Activated B cell treated with CpG ODN at 0.5 μM for 24 hours (primary cell): ENCODE measurements at regions of chr16 and their contacts with region 1.

Region 1: DNA sequence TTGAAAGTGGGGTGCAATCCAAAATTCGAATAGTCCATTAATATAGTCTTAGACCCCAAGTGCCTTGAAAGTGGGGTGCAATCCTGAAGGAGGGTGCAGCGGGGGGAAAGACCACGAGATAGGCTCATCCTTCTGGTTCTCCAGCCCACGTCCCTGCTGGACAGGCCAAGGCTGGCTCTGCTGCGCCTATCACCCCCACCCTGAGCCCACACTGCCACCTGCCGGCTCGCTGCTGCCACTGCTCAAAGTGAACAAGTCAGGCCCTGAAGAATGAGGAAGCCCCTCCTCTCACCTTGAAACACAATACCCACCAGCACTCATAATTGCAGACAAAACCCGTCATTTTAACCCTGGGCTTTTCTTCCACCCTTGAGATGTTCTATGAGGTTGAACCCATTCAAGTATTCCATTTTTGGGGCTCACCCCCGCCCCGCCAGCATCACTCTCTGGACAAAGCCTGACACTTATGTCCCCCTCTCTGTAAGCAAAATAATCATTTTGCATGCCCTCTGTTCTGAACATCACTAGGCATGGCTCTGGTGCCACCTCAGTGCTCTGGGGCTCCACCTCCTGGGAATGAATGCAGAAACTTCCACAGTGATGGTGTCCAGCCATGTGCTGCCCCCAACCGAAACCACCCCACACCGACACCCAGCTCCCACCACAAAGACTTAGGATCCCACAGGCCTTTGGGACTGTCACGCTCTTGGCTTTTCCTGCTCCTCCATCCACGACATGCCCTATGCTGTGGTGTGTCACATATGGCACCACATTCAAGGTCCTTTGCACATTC is 56.8 kb downstream of the BEAN1 start:
- DNase-seq: peak; percentile 69
- ATAC-seq: peak; percentile 94
- H3K4me3 Mint-ChIP-seq: no peak overlapping the region
- H3K27ac Mint-ChIP-seq: no peak overlapping the region
- H3K4me1 Mint-ChIP-seq: peaks cover 15% of the 10 kb centered on the region
- H3K27me3 Mint-ChIP-seq: no peaks in the 10 kb centered on the region
- CTCF ChIP-seq: peak; percentile 66

Region 2: DNA sequence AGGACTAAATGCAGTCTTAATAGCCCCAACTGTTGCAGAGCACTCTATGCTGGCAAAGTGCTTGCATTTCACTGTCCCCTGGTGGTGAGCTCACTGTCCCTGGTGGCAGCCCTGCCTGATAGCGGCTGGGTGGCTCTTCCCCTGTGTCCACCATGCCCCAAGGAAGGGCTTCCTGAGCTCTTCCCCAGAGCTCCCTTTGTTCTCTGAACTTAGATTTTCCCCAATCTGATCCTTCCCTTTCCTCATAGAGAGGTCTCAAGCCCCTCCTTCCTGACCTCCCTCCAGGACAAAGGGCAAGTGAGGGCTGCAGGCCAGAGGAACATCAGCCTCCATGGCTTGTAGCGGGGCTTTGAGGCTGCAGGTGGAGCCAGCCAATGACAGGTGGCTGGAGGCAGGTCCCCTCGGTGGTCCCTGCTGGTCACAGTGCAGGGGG is 39.8 kb before region 1 on chr16:
- CTCF ChIA-PET with region 1: no interaction called
- POLR2A ChIA-PET with region 1: no interaction called
- intact Hi-C with region 1: no loop called
- DNase-seq: no peak
- ATAC-seq: no peak
- H3K4me3 Mint-ChIP-seq: no peak overlapping the region
- H3K27ac Mint-ChIP-seq: no peak overlapping the region
- H3K4me1 Mint-ChIP-seq: no peaks in the 10 kb centered on the region
- H3K27me3 Mint-ChIP-seq: peaks cover 41% of the 10 kb centered on the region
- CTCF ChIP-seq: no peak

Region 3: GRCh38 chr16:66455970-66456369 is 27.9 kb before region 1 on chr16:
- CTCF ChIA-PET with region 1: no interaction called
- POLR2A ChIA-PET with region 1: no interaction called
- intact Hi-C with region 1: no loop called
- DNase-seq: no peak
- ATAC-seq: no peak
- H3K4me3 Mint-ChIP-seq: no peak overlapping the region
- H3K27ac Mint-ChIP-seq: no peak overlapping the region
- H3K4me1 Mint-ChIP-seq: no peaks in the 10 kb centered on the region
- H3K27me3 Mint-ChIP-seq: peaks cover 22% of the 10 kb centered on the region
- CTCF ChIP-seq: no peak

Region 4: DNA sequence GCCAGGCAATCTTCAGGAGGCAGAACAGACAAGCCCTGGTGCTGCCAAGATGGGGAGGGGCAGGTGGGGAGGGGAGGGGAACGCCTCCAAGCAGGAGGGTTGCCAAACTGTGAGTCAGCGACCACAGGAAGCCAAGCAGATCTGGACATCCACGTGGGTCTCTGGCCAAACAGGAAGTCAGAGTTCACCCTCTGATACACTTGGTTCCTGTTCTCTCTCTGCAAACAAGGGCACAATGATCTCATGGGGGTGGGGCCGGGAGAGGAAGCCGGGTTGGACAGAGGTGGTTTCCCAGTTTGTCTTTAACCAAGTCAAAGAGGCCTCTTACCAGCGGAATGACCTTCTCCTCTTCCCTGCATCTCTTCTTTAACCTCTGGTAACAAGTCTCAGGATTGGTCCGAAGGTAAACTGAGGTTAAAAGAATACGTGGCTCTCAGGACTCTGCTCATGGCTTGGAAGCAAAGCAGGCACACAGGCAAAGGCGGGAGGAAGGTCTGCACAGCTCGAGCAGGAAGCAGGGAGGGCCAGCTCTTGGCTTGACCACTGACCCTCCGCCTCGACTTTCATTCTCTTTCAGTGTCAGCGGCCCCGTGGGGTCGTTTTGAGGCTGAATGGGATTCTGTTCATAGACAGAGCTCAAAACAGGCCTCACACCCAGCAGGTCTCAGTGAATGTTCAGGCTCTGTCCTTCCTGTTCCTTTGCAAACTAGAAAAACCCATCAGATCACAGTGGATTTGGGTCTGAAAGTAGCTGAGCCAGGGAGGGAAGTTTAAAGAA is 33.1 kb after region 1 on chr16:
- CTCF ChIA-PET with region 1: interaction called, 5 read pairs
- POLR2A ChIA-PET with region 1: no interaction called
- intact Hi-C with region 1: loop called (anchors 1 kb)
- DNase-seq: peak; percentile 72
- ATAC-seq: peak; percentile 91
- H3K4me3 Mint-ChIP-seq: peak overlapping the region; percentile 90
- H3K27ac Mint-ChIP-seq: peak overlapping the region; percentile 99
- H3K4me1 Mint-ChIP-seq: peaks cover 66% of the 10 kb centered on the region
- H3K27me3 Mint-ChIP-seq: no peaks in the 10 kb centered on the region
- CTCF ChIP-seq: no peak